Psoas muscle (tissue), 8 donors: ENCODE measurements at regions of chr2 and their contacts with region 1.

Region 1: GRCh38 chr2:218329826-218330593 is 26.6 kb upstream of the CATIP start:
- DNase-seq: no peak
- ATAC-seq: no peak
- H3K4me3 ChIP-seq: no peak overlapping the region
- H3K27ac ChIP-seq: no peak overlapping the region
- H3K4me1 ChIP-seq: no peaks in the 10 kb centered on the region
- H3K27me3 ChIP-seq: no peaks in the 10 kb centered on the region
- CTCF ChIP-seq: no peak

Region 2: DNA sequence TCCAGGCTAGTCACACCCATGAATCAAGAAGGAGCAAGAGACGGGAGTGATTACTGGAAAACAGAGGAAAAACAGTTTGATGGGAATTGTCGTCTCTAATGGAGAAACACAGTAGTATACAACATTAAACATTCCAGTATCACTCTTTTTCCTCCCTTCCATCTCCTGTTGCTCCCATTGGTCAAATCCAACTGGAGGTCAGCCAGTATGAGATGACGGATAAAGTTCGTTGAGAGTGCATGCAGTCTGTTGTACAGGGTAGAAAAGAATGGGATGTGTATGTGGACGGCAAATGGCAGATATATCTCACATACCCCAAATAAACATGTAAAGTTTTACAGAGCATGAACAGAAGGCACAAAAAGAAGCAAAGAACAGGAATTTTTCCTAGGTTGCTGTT is 1248.2 kb before region 1 on chr2:
- intact Hi-C with region 1: loop called in 1 of 2 experiments (anchors 5 kb)
- DNase-seq: no peak
- ATAC-seq: no peak
- H3K4me3 ChIP-seq: no peak overlapping the region
- H3K27ac ChIP-seq: no peak overlapping the region
- H3K4me1 ChIP-seq: peaks cover 9% of the 10 kb centered on the region
- H3K27me3 ChIP-seq: no peaks in the 10 kb centered on the region
- CTCF ChIP-seq: no peak

Region 3: DNA sequence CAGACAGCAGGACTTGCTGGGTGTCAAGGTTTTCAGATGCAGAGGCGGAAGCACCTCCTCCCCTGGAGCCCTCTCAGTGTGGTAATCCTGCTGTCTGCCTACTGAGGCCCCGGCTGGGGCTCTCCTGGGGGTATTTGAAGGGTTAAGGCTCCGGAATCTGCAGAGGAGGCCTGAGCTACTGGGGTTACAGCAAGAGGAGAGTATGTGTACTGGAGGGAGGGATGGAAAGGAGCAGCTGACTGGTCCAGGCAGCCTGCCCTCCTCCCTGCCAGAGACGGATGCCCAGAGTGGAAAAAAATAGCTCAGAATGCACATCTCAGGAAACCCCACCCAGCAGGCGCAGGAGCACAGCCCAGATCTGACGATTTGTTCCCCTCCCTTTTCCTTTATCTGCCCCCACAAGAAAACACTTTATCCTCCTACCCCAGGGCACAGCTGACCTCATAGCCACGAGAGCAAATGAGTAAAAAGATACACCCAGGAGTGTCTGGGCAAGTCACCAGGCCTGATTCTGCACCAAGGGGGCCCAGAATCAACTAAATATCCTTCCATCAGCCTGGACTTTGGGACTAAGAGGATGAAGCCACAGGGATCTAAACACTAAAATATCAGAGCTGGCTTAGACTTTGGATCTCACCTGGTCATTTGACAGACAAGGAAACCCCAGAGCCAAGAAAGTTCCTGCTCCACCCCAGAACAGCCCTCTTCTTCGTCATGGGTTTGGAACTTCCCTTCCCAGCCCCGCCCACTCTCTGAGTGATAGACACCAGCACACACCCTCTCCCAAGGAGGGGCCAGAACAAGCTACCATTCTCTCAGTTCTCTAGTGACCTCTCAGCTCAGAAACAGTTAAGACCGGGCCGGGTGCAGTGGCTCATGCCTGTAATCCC is 43.2 kb before region 1 on chr2:
- intact Hi-C with region 1: no loop called
- DNase-seq: peak; percentile 90 to 94
- ATAC-seq: peak; percentile 79 to 84 (median 80)
- H3K4me3 ChIP-seq: peak overlapping the region; percentile 74
- H3K27ac ChIP-seq: peak overlapping the region; percentile 96
- H3K4me1 ChIP-seq: peaks cover 89% of the 10 kb centered on the region
- H3K27me3 ChIP-seq: no peaks in the 10 kb centered on the region
- CTCF ChIP-seq: no peak